ENCODE measurements at regions of chr12 and their contacts with region 1.

Region 1: DNA sequence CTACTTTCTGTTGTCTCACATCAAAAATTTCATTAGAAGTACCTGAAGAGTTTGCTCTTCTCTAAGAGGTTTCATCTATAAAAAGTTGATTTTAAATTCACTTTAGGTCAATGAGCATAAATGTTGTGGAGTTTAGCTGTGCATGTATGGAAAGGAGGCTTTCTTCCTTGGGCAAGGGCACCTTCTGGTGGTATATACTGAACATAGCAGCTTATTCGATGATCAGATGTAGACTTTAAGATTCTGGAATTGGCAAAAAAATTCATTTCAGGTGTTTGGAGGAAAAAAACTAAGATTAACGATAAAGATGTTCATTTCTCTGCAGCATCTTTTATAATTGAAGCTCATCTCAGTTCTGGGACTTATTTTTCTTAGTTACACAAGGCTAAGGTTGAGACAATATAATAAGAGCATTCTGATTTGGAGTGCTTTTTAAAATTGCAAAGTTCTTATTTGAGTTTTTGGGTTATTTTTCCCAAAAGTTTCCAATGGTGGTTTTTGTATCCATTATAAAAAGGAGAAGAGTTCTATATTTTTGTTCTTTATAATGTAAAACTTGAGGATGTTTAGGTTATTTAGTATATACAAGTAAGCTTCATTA is 46.8 kb downstream of the TMEM117 start:
- DNase-seq: peak in 1 of 2 experiments; percentile 63
- H3K4me3 ChIP-seq: no peak overlapping the region
- H3K4me3 Mint-ChIP-seq: no peak overlapping the region
- H3K27ac Mint-ChIP-seq: no peak overlapping the region
- H3K4me1 ChIP-seq: no peaks in the 10 kb centered on the region
- H3K4me1 Mint-ChIP-seq: peaks cover 19% of the 10 kb centered on the region
- H3K27me3 ChIP-seq: no peaks in the 10 kb centered on the region
- H3K27me3 Mint-ChIP-seq: no peaks in the 10 kb centered on the region
- CTCF ChIP-seq: peak; percentile 83 to 89

Region 2: GRCh38 chr12:43349863-43350262 is 532.8 kb before region 1 on chr12:
- CTCF ChIA-PET with region 1: no interaction called
- POLR2A ChIA-PET with region 1: no interaction called
- intact Hi-C with region 1: loop called (anchors 5 kb)
- DNase-seq: no peak
- H3K4me3 ChIP-seq: no peak overlapping the region
- H3K4me3 Mint-ChIP-seq: no peak overlapping the region
- H3K27ac Mint-ChIP-seq: no peak overlapping the region
- H3K4me1 ChIP-seq: no peaks in the 10 kb centered on the region
- H3K4me1 Mint-ChIP-seq: no peaks in the 10 kb centered on the region
- H3K27me3 ChIP-seq: no peaks in the 10 kb centered on the region
- H3K27me3 Mint-ChIP-seq: peaks cover 5% of the 10 kb centered on the region
- CTCF ChIP-seq: peak; percentile 25 to 62

Region 3: GRCh38 chr12:43758728-43759563 is 123.7 kb before region 1 on chr12 and contains the starts of genes IRAK4 and PUS7L:
- CTCF ChIA-PET with region 1: interaction called, 14 read pairs
- POLR2A ChIA-PET with region 1: interaction called, 5 read pairs
- intact Hi-C with region 1: loop called (anchors 1 kb)
- DNase-seq: peak; percentile 96 to 97
- H3K4me3 ChIP-seq: peak within 1 kb of the TSS; percentile 58
- H3K4me3 Mint-ChIP-seq: peak within 1 kb of the TSS; percentile 85
- H3K27ac Mint-ChIP-seq: peak within 1 kb of the TSS; percentile 95
- H3K4me1 ChIP-seq: no peaks in the 10 kb centered on the region; the same call in 1 of the 2 replicates
- H3K4me1 Mint-ChIP-seq: peaks cover 28% of the 10 kb centered on the region
- H3K27me3 ChIP-seq: no peaks in the 10 kb centered on the region
- H3K27me3 Mint-ChIP-seq: no peaks in the 10 kb centered on the region
- CTCF ChIP-seq: peak; percentile 23 to 57
- total RNA-seq, gene IRAK4: 11.7 and 15.3 TPM in 2 replicates
- total RNA-seq, gene PUS7L: 29.1 and 36.0 TPM in 2 replicates

Region 4: GRCh38 chr12:43786899-43787693 is 95.6 kb before region 1 on chr12:
- CTCF ChIA-PET with region 1: no interaction called
- POLR2A ChIA-PET with region 1: no interaction called
- intact Hi-C with region 1: no loop called
- DNase-seq: no peak
- H3K4me3 ChIP-seq: no peak overlapping the region
- H3K4me3 Mint-ChIP-seq: no peak overlapping the region
- H3K27ac Mint-ChIP-seq: no peak overlapping the region
- H3K4me1 ChIP-seq: no peaks in the 10 kb centered on the region
- H3K4me1 Mint-ChIP-seq: peaks cover 5% of the 10 kb centered on the region
- H3K27me3 ChIP-seq: no peaks in the 10 kb centered on the region
- H3K27me3 Mint-ChIP-seq: no peaks in the 10 kb centered on the region
- CTCF ChIP-seq: no peak

Region 5: GRCh38 chr12:43805860-43806736 is 76.6 kb before region 1 on chr12 and contains the start of gene TWF1:
- CTCF ChIA-PET with region 1: interaction called, 21 read pairs
- POLR2A ChIA-PET with region 1: interaction called, 3 read pairs
- intact Hi-C with region 1: loop called (anchors 1 kb)
- DNase-seq: peak; percentile 87 to 97
- H3K4me3 ChIP-seq: peak within 1 kb of the TSS; percentile 93
- H3K4me3 Mint-ChIP-seq: peak within 1 kb of the TSS; percentile 85
- H3K27ac Mint-ChIP-seq: peak within 1 kb of the TSS; percentile 98
- H3K4me1 ChIP-seq: peaks cover 12% of the 10 kb centered on the region; the same call in 1 of the 2 replicates
- H3K4me1 Mint-ChIP-seq: peaks cover 12% of the 10 kb centered on the region
- H3K27me3 ChIP-seq: no peaks in the 10 kb centered on the region
- H3K27me3 Mint-ChIP-seq: no peaks in the 10 kb centered on the region
- CTCF ChIP-seq: peak; percentile 48 to 53
- total RNA-seq, gene TWF1: 125 and 140 TPM in 2 replicates

Region 6: DNA sequence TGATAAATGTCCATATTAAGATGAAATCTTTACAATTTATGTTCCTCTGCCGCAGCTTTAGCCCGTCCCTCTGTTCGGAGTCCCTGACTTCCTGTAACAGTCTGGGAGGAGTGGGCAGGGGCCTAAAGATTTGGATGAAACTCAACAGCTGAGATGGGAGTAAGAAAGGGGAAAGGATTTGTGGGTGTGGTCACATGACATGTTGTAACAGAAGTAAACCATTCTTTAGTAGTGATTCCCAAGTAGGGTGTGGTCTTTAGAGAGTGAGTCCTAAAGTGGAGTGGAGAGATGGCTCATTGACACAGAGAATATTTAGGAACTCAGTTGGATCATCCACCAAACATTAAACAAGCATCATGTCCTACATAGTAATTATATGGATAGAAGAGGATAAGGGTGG is 33.9 kb before region 1 on chr12:
- CTCF ChIA-PET with region 1: no interaction called
- POLR2A ChIA-PET with region 1: no interaction called
- intact Hi-C with region 1: loop called (anchors 1 kb)
- DNase-seq: peak; percentile 47 to 48
- H3K4me3 ChIP-seq: no peak overlapping the region
- H3K4me3 Mint-ChIP-seq: peak overlapping the region; percentile 56
- H3K27ac Mint-ChIP-seq: peak overlapping the region; percentile 85
- H3K4me1 ChIP-seq: peaks cover 64% of the 10 kb centered on the region
- H3K4me1 Mint-ChIP-seq: peaks cover 51% of the 10 kb centered on the region
- H3K27me3 ChIP-seq: no peaks in the 10 kb centered on the region
- H3K27me3 Mint-ChIP-seq: no peaks in the 10 kb centered on the region
- CTCF ChIP-seq: no peak

Measured in Caco-2 (cell line).